CD14-positive monocyte (primary cell): ENCODE measurements at regions of chr5 and their contacts with region 1.

Region 1: DNA sequence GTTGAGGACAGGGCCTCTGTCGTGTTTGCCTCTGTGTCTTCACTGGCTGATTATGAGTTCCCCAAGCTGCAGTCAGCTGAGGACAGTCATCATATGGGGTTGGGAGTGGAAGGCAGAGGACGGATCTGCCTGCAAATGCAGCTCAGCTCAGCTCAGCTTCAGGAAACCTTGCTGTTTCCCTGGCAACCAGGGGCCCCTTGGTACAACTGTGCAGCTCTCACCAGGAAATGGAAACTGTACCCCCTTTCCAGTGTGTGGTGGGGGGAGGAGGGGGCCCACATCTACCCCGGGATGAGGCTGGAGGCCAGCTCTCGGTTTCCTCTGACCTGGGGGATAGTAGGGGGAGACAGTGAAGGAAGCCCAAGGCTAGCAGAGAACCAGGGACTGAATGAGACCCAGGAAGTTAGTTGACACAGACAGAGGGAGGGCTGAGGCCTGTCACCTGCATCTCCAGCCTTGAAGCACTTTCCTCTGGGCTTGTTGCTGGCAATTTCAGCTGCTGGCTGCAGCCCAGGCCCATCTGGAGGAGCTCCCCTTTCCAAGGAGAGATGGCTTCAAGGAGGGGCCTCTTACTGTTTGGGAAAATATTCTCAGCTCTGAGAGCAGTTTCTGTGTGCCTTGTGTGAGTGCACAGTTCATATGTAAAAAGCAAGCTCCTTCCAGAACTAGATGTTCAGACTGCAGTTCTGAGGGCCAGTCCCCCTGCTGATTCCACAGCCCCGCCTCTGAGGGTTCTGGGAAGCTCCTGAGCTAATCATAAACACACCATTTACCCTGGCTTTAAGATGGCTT is 6.9 kb downstream of the ANXA6 start:
- DNase-seq: peak; percentile 65 to 71 (median 70)
- H3K4me3 ChIP-seq: peak overlapping the region in 1 of 3 experiments; percentile 52
- H3K4me3 Mint-ChIP-seq: peak overlapping the region in 1 of 2 donors; percentile 58
- H3K27ac ChIP-seq: peak overlapping the region; percentile 87
- H3K27ac Mint-ChIP-seq: peak overlapping the region; percentile 92 to 100 (median 97)
- H3K4me1 ChIP-seq: peaks cover 85 to 92% of the 10 kb centered on the region in 2 donors
- H3K4me1 Mint-ChIP-seq: peaks cover 98% of the 10 kb centered on the region
- H3K27me3 ChIP-seq: no peaks in the 10 kb centered on the region
- H3K27me3 Mint-ChIP-seq: no peaks in the 10 kb centered on the region
- CTCF ChIP-seq: no peak

Region 2: GRCh38 chr5:151134238-151134637 is 16.4 kb before region 1 on chr5:
- intact Hi-C with region 1: loop called in 1 of 2 experiments (anchors 2 kb)
- DNase-seq: no peak
- H3K4me3 ChIP-seq: no peak overlapping the region
- H3K4me3 Mint-ChIP-seq: no peak overlapping the region
- H3K27ac ChIP-seq: peak overlapping the region in 1 of 2 donors; percentile 34
- H3K27ac Mint-ChIP-seq: peak overlapping the region; percentile 4 to 88 (median 59)
- H3K4me1 ChIP-seq: peaks cover 51 to 57% of the 10 kb centered on the region in 2 donors
- H3K4me1 Mint-ChIP-seq: peaks cover 79% of the 10 kb centered on the region
- H3K27me3 ChIP-seq: no peaks in the 10 kb centered on the region
- H3K27me3 Mint-ChIP-seq: peaks cover 0 to 2% (median 0%) of the 10 kb centered on the region in 3 donors
- CTCF ChIP-seq: no peak